Dendritic cell treated with granulocyte-macrophage colony-stimulating factor and Interleukin-4, amounts not matched to agents 40 ng/mL and 50 ng/mL, for 4 days (primary cell): ENCODE measurements at regions of chr1 and their contacts with region 1.

Region 1: DNA sequence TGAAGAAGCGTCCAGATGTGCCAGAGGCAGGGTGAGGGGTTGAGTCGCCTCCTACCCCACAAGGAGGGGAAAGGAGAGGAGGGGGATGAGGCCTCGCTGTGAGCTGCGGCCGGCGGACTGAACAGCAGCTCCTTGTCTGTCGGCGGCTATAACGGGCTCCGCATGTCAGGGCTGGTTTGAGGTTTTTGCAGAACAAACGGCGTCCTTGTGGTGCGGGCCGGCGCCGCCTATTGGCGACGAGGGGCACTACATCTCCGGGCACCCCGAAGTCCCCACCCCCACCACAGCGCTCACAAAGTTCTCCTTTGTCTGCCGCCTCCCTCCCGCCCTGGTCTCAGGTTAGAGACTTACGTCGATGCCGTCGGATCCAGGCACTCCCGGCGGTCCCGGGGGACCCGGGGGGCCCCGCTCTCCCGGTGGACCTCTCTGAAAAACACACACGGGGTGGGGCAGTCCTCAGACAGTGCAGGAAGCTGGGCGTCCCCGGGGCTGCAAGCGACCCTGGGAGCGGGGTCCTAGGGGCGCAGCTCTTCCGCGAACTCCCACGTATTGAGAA is 1.8 kb downstream of the COL9A2 start:
- H3K4me3 Mint-ChIP-seq: peak overlapping the region; percentile 70
- H3K27ac Mint-ChIP-seq: peak overlapping the region; percentile 44
- H3K4me1 Mint-ChIP-seq: peaks cover 60% of the 10 kb centered on the region
- H3K27me3 Mint-ChIP-seq: peaks cover 51% of the 10 kb centered on the region

Region 2: GRCh38 chr1:40267767-40268187 is 47.5 kb before region 1 on chr1:
- intact Hi-C with region 1: loop called (anchors 10 kb)
- H3K4me3 Mint-ChIP-seq: no peak overlapping the region
- H3K27ac Mint-ChIP-seq: no peak overlapping the region
- H3K4me1 Mint-ChIP-seq: peaks cover 7% of the 10 kb centered on the region
- H3K27me3 Mint-ChIP-seq: no peaks in the 10 kb centered on the region